ENCODE measurements at regions of chr10 and their contacts with region 1.

Region 1: GRCh38 chr10:46079831-46080575 is 33.9 kb upstream of the MSMB start:
- DNase-seq: no peak
- ATAC-seq: peak; percentile 46
- H3K4me3 ChIP-seq: no peak overlapping the region
- H3K27ac ChIP-seq: no peak overlapping the region
- H3K4me1 ChIP-seq: peaks cover 7% of the 10 kb centered on the region
- H3K27me3 ChIP-seq: peaks cover 4% of the 10 kb centered on the region
- CTCF ChIP-seq: no peak
- POLR2A ChIP-seq: no peak
- RAD21 ChIP-seq: no peak

Region 2: DNA sequence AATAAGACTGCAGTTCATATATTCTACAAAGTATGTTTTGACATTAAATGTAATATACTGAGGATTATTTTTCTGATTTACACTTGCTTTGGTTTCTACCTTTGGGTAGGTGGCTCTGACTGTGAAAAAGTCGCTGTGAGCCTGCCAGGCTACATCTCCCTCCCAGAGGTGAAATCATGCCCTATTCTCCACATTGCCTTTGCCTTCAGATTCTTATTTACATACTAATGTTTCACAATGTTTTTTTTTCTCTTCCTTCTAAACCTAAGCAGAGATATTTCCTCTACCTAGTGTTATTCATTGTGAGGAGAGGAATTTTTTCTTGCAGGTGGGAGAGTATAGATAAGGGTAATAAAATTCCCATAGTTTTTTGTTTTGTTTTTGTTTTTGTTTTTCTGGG is 95.3 kb after region 1 on chr10:
- CTCF ChIA-PET with region 1: no interaction called
- POLR2A ChIA-PET with region 1: no interaction called
- dilution Hi-C with region 1: no loop called
- in situ Hi-C with region 1: no loop called
- intact Hi-C with region 1: loop called (anchors 5 kb)
- DNase-seq: no peak
- ATAC-seq: no peak
- H3K4me3 ChIP-seq: no peak overlapping the region
- H3K27ac ChIP-seq: no peak overlapping the region
- H3K4me1 ChIP-seq: no peaks in the 10 kb centered on the region
- H3K27me3 ChIP-seq: peaks cover 3% of the 10 kb centered on the region; the same call in 1 of the 2 replicates
- CTCF ChIP-seq: no peak
- POLR2A ChIP-seq: no peak
- RAD21 ChIP-seq: no peak